Left ventricle myocardium superior (tissue), 1 donor: ENCODE measurements at regions of chr6 and their contacts with region 1.

Region 1: GRCh38 chr6:89689732-89690131 is 51.2 kb upstream of the LYRM2 start:
- DNase-seq: no peak
- ATAC-seq: peak; percentile 78

Region 2: GRCh38 chr6:89745716-89746115 is 56.0 kb after region 1 on chr6:
- intact Hi-C with region 1: loop called (anchors 10 kb)
- DNase-seq: no peak
- ATAC-seq: no peak